CD4-positive, alpha-beta T cell (primary cell): ENCODE measurements at regions of chr20 and their contacts with region 1.

Region 1: GRCh38 chr20:63864847-63865640 is at the start of gene TPD52L2:
- DNase-seq: peak; percentile 94 to 99 (median 97)
- ATAC-seq: peak; percentile 88
- H3K4me3 ChIP-seq: peak within 1 kb of the TSS; percentile 98
- H3K4me3 Mint-ChIP-seq: peak within 1 kb of the TSS; percentile 97
- H3K27ac ChIP-seq: peak within 1 kb of the TSS; percentile 78 to 89
- H3K27ac Mint-ChIP-seq: peak within 1 kb of the TSS; percentile 85
- H3K4me1 ChIP-seq: peaks cover 37% of the 10 kb centered on the region
- H3K4me1 Mint-ChIP-seq: peaks cover 31% of the 10 kb centered on the region
- H3K27me3 ChIP-seq: no peaks in the 10 kb centered on the region
- H3K27me3 Mint-ChIP-seq: no peaks in the 10 kb centered on the region
- CTCF ChIP-seq: no peak
- total RNA-seq, gene TPD52L2: 15.1 to 15.3 TPM

Region 2: DNA sequence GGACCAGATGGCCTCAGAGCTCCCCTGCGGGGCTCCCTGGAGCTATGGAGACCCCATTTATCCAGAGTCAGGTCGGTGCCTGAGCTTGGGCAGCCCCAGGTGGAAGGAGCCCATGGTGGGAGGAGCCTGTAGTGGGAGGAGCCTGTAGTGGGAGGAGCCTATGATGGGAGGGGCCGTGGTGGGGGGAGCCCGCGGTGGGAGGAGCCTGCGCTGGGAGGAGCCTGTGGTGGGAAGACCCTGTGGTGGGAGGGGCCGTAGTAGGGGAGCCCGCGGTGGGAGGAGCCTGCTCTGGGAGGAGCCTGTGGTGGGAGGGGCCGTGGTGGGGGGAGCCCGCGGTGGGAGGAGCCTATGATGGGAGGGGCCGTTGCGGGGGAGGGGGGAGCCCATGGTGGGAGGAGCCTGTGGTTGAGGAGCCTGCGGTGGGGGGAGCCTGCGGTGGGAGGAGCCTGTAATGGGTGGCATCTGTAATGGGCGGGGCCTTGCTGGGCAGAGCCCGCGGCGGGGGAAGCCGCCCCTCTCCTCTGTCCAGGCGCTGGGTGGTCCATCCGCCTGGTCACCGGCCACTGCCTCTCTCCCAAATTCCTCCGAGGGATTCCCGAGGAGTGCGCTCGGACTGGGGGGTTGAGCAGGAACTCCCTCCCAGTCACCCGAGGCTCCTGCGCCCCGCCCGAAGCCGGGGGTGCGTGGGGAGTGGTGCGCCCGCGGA is 311.7 kb before region 1 on chr20:
- CTCF ChIA-PET with region 1: no interaction called
- POLR2A ChIA-PET with region 1: interaction called, 4 read pairs
- intact Hi-C with region 1: loop called in 1 of 2 experiments (anchors 1 kb)
- DNase-seq: peak; percentile 74 to 96 (median 90)
- ATAC-seq: peak; percentile 83
- H3K4me3 ChIP-seq: peak overlapping the region; percentile 68
- H3K4me3 Mint-ChIP-seq: peak overlapping the region; percentile 90
- H3K27ac ChIP-seq: peak overlapping the region; percentile 73 to 82
- H3K27ac Mint-ChIP-seq: peak overlapping the region; percentile 91
- H3K4me1 ChIP-seq: peaks cover 39% of the 10 kb centered on the region
- H3K4me1 Mint-ChIP-seq: peaks cover 18% of the 10 kb centered on the region
- H3K27me3 ChIP-seq: peaks cover 3 to 4% of the 10 kb centered on the region in 2 experiments
- H3K27me3 Mint-ChIP-seq: no peaks in the 10 kb centered on the region
- CTCF ChIP-seq: no peak

Region 3: DNA sequence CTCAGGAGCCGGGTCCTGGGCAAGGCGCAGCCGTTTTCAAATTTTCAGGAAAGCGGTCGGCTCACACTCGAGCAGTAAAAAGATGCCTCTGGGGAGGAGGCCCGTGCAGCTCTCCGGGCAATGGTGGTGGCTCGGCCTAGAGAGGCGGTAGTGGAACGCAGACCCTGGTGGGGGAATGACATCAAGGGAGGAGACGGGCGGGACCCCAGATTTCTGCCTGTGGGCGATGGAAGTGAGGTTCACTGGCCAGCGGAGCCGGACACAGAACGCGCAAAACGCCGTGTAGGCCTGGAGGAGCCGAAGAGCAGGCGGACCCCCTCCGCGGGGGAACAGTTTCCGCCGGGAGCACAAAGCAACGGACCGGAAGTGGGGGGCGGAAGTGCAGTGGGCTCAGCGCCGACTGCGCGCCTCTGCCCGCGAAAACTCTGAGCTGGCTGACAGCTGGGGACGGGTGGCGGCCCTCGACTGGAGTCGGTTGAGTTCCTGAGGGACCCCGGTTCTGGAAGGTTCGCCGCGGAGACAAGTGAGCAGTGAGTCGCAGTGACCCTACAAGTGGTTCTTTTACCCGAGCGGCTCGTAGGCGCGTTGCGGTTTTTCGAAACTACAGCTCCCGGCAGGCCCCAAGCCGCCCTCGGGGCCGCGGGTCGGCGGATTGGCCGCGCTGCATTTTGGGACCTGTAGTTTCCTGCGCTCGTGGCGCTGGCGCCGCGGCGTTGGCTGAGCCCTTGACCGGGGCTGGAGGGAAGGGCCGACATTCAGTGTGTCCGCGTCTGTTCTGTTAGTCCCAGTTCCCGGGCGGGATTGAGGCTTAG is 206.9 kb before region 1 on chr20 and contains the start of gene RTEL1:
- CTCF ChIA-PET with region 1: interaction called, 4 read pairs
- POLR2A ChIA-PET with region 1: interaction called, 5 read pairs
- intact Hi-C with region 1: loop called (anchors 1 to 10 kb)
- DNase-seq: peak; percentile 77 to 93 (median 86)
- ATAC-seq: peak; percentile 83
- H3K4me3 ChIP-seq: peak within 1 kb of the TSS; percentile 76
- H3K4me3 Mint-ChIP-seq: peak within 1 kb of the TSS; percentile 98
- H3K27ac ChIP-seq: peak within 1 kb of the TSS; percentile 56 to 87
- H3K27ac Mint-ChIP-seq: peak within 1 kb of the TSS; percentile 96
- H3K4me1 ChIP-seq: peaks cover 47% of the 10 kb centered on the region
- H3K4me1 Mint-ChIP-seq: peaks cover 38% of the 10 kb centered on the region
- H3K27me3 ChIP-seq: no peaks in the 10 kb centered on the region
- H3K27me3 Mint-ChIP-seq: no peaks in the 10 kb centered on the region
- CTCF ChIP-seq: no peak
- total RNA-seq, gene RTEL1: 25.5 to 27.6 TPM

Region 4: GRCh38 chr20:63782051-63782471 is 83.0 kb before region 1 on chr20:
- CTCF ChIA-PET with region 1: interaction called, 10 read pairs
- POLR2A ChIA-PET with region 1: interaction called, 9 read pairs
- intact Hi-C with region 1: loop called (anchors 1 to 5 kb)
- DNase-seq: peak in 13 of 14 experiments; percentile 16 to 88 (median 48)
- ATAC-seq: peak; percentile 93
- H3K4me3 ChIP-seq: peak overlapping the region; percentile 14
- H3K4me3 Mint-ChIP-seq: peak overlapping the region; percentile 43
- H3K27ac ChIP-seq: peak overlapping the region in 1 of 2 donors; percentile 22
- H3K27ac Mint-ChIP-seq: peak overlapping the region; percentile 67
- H3K4me1 ChIP-seq: peaks cover 23% of the 10 kb centered on the region
- H3K4me1 Mint-ChIP-seq: peaks cover 23% of the 10 kb centered on the region
- H3K27me3 ChIP-seq: no peaks in the 10 kb centered on the region
- H3K27me3 Mint-ChIP-seq: no peaks in the 10 kb centered on the region
- CTCF ChIP-seq: peak; percentile 51

Region 5: DNA sequence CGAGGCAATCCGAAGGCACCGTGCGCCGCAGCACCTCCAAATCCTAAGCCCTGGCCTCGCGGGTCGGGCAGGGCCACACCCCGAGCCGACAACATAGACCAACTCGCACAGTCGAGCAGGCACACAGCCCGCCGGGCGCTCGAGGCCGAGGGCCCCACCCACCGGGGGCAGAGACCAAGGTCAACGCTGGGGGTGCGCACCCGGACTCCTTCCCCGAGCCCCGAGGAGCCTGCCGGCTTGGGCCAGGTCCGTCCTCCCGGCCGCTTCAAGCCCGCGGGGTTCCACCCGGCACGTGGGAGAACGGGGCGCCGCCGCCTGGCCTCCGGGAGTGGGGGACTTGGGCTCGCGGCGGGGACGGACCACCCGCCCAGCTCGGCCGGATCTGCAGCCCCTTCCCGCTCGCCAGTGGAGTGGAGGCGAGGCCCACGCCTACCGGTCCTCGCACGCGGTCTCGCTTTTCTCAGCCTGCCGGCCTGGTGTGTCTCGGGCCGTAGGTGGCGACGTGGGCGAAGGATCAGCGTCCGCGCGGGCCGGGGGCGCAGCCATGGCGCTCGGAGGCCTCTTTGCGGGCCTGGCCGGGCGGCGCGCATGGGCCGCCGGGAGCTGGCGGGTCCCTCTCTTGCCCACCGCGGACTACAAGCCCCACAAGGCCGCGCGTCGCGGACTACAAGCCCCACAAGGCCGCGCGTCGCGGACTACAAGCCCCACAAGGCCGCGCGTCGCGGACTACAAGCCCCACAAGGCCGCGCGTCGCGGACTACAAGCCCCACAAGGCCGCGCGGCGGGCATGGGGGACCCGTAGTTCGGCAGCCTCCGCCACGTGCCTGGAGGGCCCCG is 91.0 kb after region 1 on chr20 and contains the start of gene UCKL1:
- CTCF ChIA-PET with region 1: interaction called, 3 read pairs
- POLR2A ChIA-PET with region 1: interaction called, 22 read pairs
- intact Hi-C with region 1: no loop called
- DNase-seq: peak; percentile 81 to 95 (median 88)
- ATAC-seq: peak; percentile 79
- H3K4me3 ChIP-seq: peak within 1 kb of the TSS; percentile 77
- H3K4me3 Mint-ChIP-seq: peak within 1 kb of the TSS; percentile 87
- H3K27ac ChIP-seq: peak within 1 kb of the TSS; percentile 45 to 69
- H3K27ac Mint-ChIP-seq: peak within 1 kb of the TSS; percentile 82
- H3K4me1 ChIP-seq: peaks cover 59% of the 10 kb centered on the region
- H3K4me1 Mint-ChIP-seq: peaks cover 37% of the 10 kb centered on the region
- H3K27me3 ChIP-seq: no peaks in the 10 kb centered on the region
- H3K27me3 Mint-ChIP-seq: no peaks in the 10 kb centered on the region
- CTCF ChIP-seq: no peak
- total RNA-seq, gene UCKL1: 41.3 to 46.1 TPM

Region 6: DNA sequence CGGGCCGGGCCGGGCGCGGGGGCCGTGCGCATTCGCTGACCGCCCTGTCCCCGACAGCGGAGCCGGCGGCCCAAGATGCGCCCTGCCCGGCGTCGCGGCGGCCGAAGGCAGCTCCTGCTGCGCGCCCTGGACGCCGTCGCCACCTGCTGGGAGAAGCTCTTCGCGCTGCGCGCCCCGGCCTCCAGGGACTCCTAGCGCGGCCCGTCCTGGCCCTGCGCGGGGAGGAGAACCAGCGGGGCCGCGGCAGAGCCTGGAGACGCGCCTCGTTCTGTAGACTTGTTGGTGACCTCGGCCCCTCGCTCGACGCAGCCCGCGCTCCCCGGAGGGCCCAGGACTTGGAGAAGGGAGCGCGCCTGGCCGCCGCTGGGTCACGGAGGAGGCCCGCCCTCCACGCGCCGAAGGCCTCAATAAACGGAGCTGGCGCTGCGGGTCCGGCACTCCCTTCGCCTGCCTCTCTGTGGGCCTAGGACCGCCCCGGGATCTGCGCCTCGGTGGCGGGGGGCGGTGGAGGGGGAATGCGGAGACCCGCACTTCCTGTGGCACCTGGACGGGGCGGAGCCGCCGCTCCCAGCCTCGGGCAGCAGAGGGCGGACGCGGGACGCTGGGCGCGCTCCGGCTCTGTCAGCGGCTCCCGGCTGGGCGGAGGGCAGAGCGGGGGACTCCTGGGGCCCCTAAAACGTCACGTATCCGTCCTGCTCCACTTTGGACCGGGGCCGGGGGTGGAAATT is 173.7 kb after region 1 on chr20:
- CTCF ChIA-PET with region 1: interaction called, 11 read pairs
- POLR2A ChIA-PET with region 1: interaction called, 9 read pairs
- intact Hi-C with region 1: no loop called
- DNase-seq: peak; percentile 61 to 88 (median 78)
- ATAC-seq: peak; percentile 82
- H3K4me3 ChIP-seq: peak overlapping the region; percentile 49
- H3K4me3 Mint-ChIP-seq: peak overlapping the region; percentile 75
- H3K27ac ChIP-seq: peak overlapping the region in 1 of 2 donors; percentile 13
- H3K27ac Mint-ChIP-seq: no peak overlapping the region
- H3K4me1 ChIP-seq: peaks cover 85% of the 10 kb centered on the region
- H3K4me1 Mint-ChIP-seq: peaks cover 39% of the 10 kb centered on the region
- H3K27me3 ChIP-seq: peaks cover 0 to 4% of the 10 kb centered on the region in 2 experiments
- H3K27me3 Mint-ChIP-seq: no peaks in the 10 kb centered on the region
- CTCF ChIP-seq: peak; percentile 93

Region 7: GRCh38 chr20:64188682-64189529 is 323.9 kb after region 1 on chr20:
- CTCF ChIA-PET with region 1: no interaction called
- POLR2A ChIA-PET with region 1: no interaction called
- intact Hi-C with region 1: no loop called
- DNase-seq: no peak
- ATAC-seq: no peak
- H3K4me3 ChIP-seq: no peak overlapping the region
- H3K4me3 Mint-ChIP-seq: no peak overlapping the region
- H3K27ac ChIP-seq: no peak overlapping the region
- H3K27ac Mint-ChIP-seq: no peak overlapping the region
- H3K4me1 ChIP-seq: peaks cover 8% of the 10 kb centered on the region
- H3K4me1 Mint-ChIP-seq: peaks cover 4% of the 10 kb centered on the region
- H3K27me3 ChIP-seq: peaks cover 4 to 7% of the 10 kb centered on the region in 2 experiments
- H3K27me3 Mint-ChIP-seq: peaks cover 32% of the 10 kb centered on the region
- CTCF ChIP-seq: no peak